CD4-positive, alpha-beta memory T cell (primary cell): ENCODE measurements at regions of chr12 and their contacts with region 1.

Region 1: GRCh38 chr12:7933255-7933729 is 2.7 kb downstream of the SLC2A3 start:
- DNase-seq: peak; percentile 82 to 87 (median 86)
- H3K4me3 ChIP-seq: peak overlapping the region; percentile 84 to 87
- H3K4me3 Mint-ChIP-seq: no peak overlapping the region
- H3K27ac ChIP-seq: peak overlapping the region; percentile 90
- H3K27ac Mint-ChIP-seq: no peak overlapping the region
- H3K4me1 ChIP-seq: peaks cover 68% of the 10 kb centered on the region
- H3K4me1 Mint-ChIP-seq: peaks cover 22 to 39% (median 30%) of the 10 kb centered on the region in 4 donors
- H3K27me3 ChIP-seq: no peaks in the 10 kb centered on the region
- H3K27me3 Mint-ChIP-seq: no peaks in the 10 kb centered on the region

Region 2: DNA sequence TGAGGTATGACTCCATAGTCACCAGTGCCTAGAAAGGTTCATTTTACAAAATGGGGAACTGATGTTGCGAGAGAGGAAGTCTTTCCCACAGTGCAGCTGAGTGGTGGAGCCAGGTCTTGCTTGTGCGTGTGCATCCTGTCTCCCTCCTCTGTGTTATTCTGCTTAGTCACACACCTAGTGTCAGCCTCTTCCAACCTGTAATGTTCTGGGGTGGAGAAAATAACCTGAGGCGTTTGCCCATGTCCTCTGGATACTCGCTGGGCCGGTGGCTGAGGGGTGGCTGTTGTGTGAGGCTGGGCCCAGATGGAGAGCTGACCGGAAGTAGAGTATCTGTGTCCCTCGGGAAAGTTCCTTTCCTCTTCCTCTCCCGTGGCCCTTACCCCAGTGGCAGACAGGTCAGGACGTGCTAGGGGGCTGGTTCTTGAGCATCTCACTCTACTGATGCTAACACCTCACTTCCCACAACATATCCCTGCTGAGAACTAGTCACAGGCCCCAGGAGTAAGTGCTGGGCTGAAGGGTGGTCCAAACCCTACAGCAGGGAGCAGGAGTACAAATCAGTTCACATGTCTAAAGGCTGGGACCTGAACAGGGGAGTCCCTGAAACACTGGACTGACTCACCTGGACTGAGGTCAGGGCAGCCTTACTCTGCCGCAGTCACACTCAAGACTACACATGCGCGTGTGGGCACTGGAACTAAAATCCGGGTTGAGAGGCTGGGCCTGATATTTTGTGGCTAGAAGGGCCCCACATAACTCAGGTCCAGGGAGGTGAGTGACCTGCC is 1187.4 kb before region 1 on chr12:
- CTCF ChIA-PET with region 1: no interaction called
- POLR2A ChIA-PET with region 1: no interaction called
- intact Hi-C with region 1: no loop called
- DNase-seq: peak in 2 of 5 donors; percentile 41 to 42
- H3K4me3 ChIP-seq: no peak overlapping the region
- H3K4me3 Mint-ChIP-seq: peak overlapping the region in 1 of 8 donors; percentile 23
- H3K27ac ChIP-seq: no peak overlapping the region
- H3K27ac Mint-ChIP-seq: peak overlapping the region; percentile 53 to 93 (median 84)
- H3K4me1 ChIP-seq: peaks cover 13% of the 10 kb centered on the region
- H3K4me1 Mint-ChIP-seq: peaks cover 8 to 15% (median 13%) of the 10 kb centered on the region in 4 donors
- H3K27me3 ChIP-seq: no peaks in the 10 kb centered on the region
- H3K27me3 Mint-ChIP-seq: no peaks in the 10 kb centered on the region

Region 3: DNA sequence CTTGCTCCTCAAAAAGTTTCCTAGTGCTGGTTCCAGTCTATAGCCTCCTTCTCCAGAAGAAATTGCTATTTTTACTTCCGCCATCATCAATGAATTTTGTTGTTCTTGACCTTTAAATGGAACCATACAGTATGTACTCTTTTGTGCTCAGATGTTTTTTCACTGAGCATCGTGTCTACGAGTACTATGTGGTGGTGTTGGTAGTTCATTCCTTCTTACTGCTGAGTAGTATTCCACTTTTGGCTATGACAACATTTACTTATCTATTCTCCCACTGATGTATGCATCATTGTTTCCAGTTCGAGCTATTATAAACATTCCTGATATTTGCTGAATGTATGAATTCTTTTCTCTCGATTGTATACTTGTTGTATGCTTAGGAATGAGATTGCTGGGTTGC is 89.2 kb before region 1 on chr12:
- CTCF ChIA-PET with region 1: no interaction called
- POLR2A ChIA-PET with region 1: no interaction called
- intact Hi-C with region 1: no loop called
- DNase-seq: no peak
- H3K4me3 ChIP-seq: no peak overlapping the region
- H3K4me3 Mint-ChIP-seq: peak overlapping the region in 1 of 8 donors; percentile 68
- H3K27ac ChIP-seq: no peak overlapping the region
- H3K27ac Mint-ChIP-seq: no peak overlapping the region
- H3K4me1 ChIP-seq: no peaks in the 10 kb centered on the region
- H3K4me1 Mint-ChIP-seq: peaks cover 0 to 8% (median 3%) of the 10 kb centered on the region in 4 donors
- H3K27me3 ChIP-seq: no peaks in the 10 kb centered on the region
- H3K27me3 Mint-ChIP-seq: peaks cover 7 to 13% of the 10 kb centered on the region in 2 donors

Region 4: GRCh38 chr12:7915559-7916403 is 17.5 kb before region 1 on chr12:
- CTCF ChIA-PET with region 1: interaction called, 8 read pairs
- POLR2A ChIA-PET with region 1: interaction called, 28 read pairs
- intact Hi-C with region 1: no loop called
- DNase-seq: peak in 2 of 5 donors; percentile 19 to 52
- H3K4me3 ChIP-seq: no peak overlapping the region
- H3K4me3 Mint-ChIP-seq: peak overlapping the region in 3 of 8 donors; percentile 3 to 54 (median 15)
- H3K27ac ChIP-seq: no peak overlapping the region
- H3K27ac Mint-ChIP-seq: peak overlapping the region in 2 of 7 donors; percentile 70 to 82
- H3K4me1 ChIP-seq: peaks cover 9% of the 10 kb centered on the region
- H3K4me1 Mint-ChIP-seq: peaks cover 12 to 43% (median 24%) of the 10 kb centered on the region in 4 donors
- H3K27me3 ChIP-seq: no peaks in the 10 kb centered on the region
- H3K27me3 Mint-ChIP-seq: no peaks in the 10 kb centered on the region

Region 5: DNA sequence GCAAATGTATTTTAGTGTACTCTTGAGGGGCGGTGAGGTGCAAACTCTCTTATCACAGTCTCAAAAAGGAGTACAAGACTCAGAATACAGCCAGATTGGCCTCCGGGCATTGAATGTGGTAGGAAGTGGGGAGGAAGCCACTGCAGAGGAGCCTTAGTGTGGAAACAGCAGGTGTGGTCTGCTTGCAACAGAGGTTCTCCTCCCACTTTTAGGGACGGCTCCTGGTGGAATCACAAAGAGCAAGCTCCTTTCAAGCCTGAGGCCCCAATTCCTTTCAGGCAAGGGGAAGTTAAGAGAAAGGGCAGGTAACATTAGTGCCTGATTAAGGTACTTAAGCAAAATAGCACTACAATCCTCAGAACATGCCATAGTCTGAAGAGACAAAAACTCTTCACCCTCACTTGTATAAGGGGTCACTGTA is 26.4 kb after region 1 on chr12:
- CTCF ChIA-PET with region 1: interaction called, 396 read pairs
- POLR2A ChIA-PET with region 1: interaction called, 394 read pairs
- intact Hi-C with region 1: loop called (anchors 1 kb)
- DNase-seq: peak; percentile 32 to 59 (median 55)
- H3K4me3 ChIP-seq: peak overlapping the region; percentile 30 to 54
- H3K4me3 Mint-ChIP-seq: peak overlapping the region; percentile 81 to 96 (median 92)
- H3K27ac ChIP-seq: peak overlapping the region; percentile 69
- H3K27ac Mint-ChIP-seq: peak overlapping the region; percentile 85 to 99 (median 96)
- H3K4me1 ChIP-seq: peaks cover 39% of the 10 kb centered on the region
- H3K4me1 Mint-ChIP-seq: peaks cover 26 to 44% (median 35%) of the 10 kb centered on the region in 4 donors
- H3K27me3 ChIP-seq: no peaks in the 10 kb centered on the region
- H3K27me3 Mint-ChIP-seq: no peaks in the 10 kb centered on the region

Region 6: GRCh38 chr12:7989827-7990551 is 56.7 kb after region 1 on chr12:
- CTCF ChIA-PET with region 1: interaction called, 136 read pairs
- POLR2A ChIA-PET with region 1: interaction called, 92 read pairs
- intact Hi-C with region 1: loop called (anchors 1 kb)
- DNase-seq: peak; percentile 60 to 85 (median 67)
- H3K4me3 ChIP-seq: peak overlapping the region; percentile 14 to 46
- H3K4me3 Mint-ChIP-seq: peak overlapping the region; percentile 64 to 90 (median 80)
- H3K27ac ChIP-seq: peak overlapping the region; percentile 57
- H3K27ac Mint-ChIP-seq: peak overlapping the region; percentile 79 to 98 (median 95)
- H3K4me1 ChIP-seq: peaks cover 44% of the 10 kb centered on the region
- H3K4me1 Mint-ChIP-seq: peaks cover 21 to 36% (median 26%) of the 10 kb centered on the region in 4 donors
- H3K27me3 ChIP-seq: no peaks in the 10 kb centered on the region
- H3K27me3 Mint-ChIP-seq: no peaks in the 10 kb centered on the region

Region 7: GRCh38 chr12:8026291-8026900 is 93.1 kb after region 1 on chr12:
- CTCF ChIA-PET with region 1: interaction called, 6 read pairs
- POLR2A ChIA-PET with region 1: interaction called, 59 read pairs
- intact Hi-C with region 1: loop called (anchors 1 kb)
- DNase-seq: peak; percentile 97 to 99 (median 98)
- H3K4me3 ChIP-seq: peak overlapping the region; percentile 89 to 94
- H3K4me3 Mint-ChIP-seq: peak overlapping the region; percentile 90 to 99 (median 96)
- H3K27ac ChIP-seq: peak overlapping the region; percentile 99
- H3K27ac Mint-ChIP-seq: peak overlapping the region; percentile 96 to 100 (median 100)
- H3K4me1 ChIP-seq: peaks cover 14% of the 10 kb centered on the region
- H3K4me1 Mint-ChIP-seq: peaks cover 10 to 20% (median 15%) of the 10 kb centered on the region in 4 donors
- H3K27me3 ChIP-seq: no peaks in the 10 kb centered on the region
- H3K27me3 Mint-ChIP-seq: no peaks in the 10 kb centered on the region

Region 8: GRCh38 chr12:8226355-8226754 is 293.1 kb after region 1 on chr12:
- CTCF ChIA-PET with region 1: no interaction called
- POLR2A ChIA-PET with region 1: no interaction called
- intact Hi-C with region 1: no loop called
- DNase-seq: no peak
- H3K4me3 ChIP-seq: no peak overlapping the region
- H3K4me3 Mint-ChIP-seq: no peak overlapping the region
- H3K27ac ChIP-seq: no peak overlapping the region
- H3K27ac Mint-ChIP-seq: peak overlapping the region in 1 of 7 donors; percentile 19
- H3K4me1 ChIP-seq: no peaks in the 10 kb centered on the region
- H3K4me1 Mint-ChIP-seq: peaks cover 0 to 14% (median 0%) of the 10 kb centered on the region in 4 donors
- H3K27me3 ChIP-seq: no peaks in the 10 kb centered on the region
- H3K27me3 Mint-ChIP-seq: peaks cover 2 to 3% of the 10 kb centered on the region in 2 donors